ENCODE measurements at regions of chr3 and their contacts with region 1.

Region 1: GRCh38 chr3:52220380-52221026 is 4.9 kb downstream of the TLR9 start:
- DNase-seq: peak; percentile 75 to 90 (median 83)
- ATAC-seq: peak; percentile 88
- H3K4me3 ChIP-seq: peak overlapping the region; percentile 28
- H3K4me3 Mint-ChIP-seq: peak overlapping the region; percentile 39 to 77 (median 64)
- H3K27ac ChIP-seq: no peak overlapping the region
- H3K27ac Mint-ChIP-seq: peak overlapping the region; percentile 65 to 90 (median 77)
- H3K4me1 ChIP-seq: peaks cover 76 to 88% of the 10 kb centered on the region in 2 donors
- H3K4me1 Mint-ChIP-seq: peaks cover 65 to 95% (median 80%) of the 10 kb centered on the region in 7 donors
- H3K27me3 ChIP-seq: no peaks in the 10 kb centered on the region
- H3K27me3 Mint-ChIP-seq: no peaks in the 10 kb centered on the region

Region 2: GRCh38 chr3:52001443-52001974 is 219.0 kb before region 1 on chr3:
- CTCF ChIA-PET with region 1: interaction called, 4 read pairs
- POLR2A ChIA-PET with region 1: no interaction called
- intact Hi-C with region 1: loop called in 1 of 2 experiments (anchors 5 kb)
- DNase-seq: peak; percentile 73 to 86 (median 81)
- ATAC-seq: peak; percentile 98
- H3K4me3 ChIP-seq: no peak overlapping the region
- H3K4me3 Mint-ChIP-seq: peak overlapping the region in 2 of 10 donors; percentile 12 to 16
- H3K27ac ChIP-seq: no peak overlapping the region
- H3K27ac Mint-ChIP-seq: peak overlapping the region in 3 of 9 donors; percentile 8 to 41 (median 11)
- H3K4me1 ChIP-seq: peaks cover 6 to 22% of the 10 kb centered on the region in 2 donors
- H3K4me1 Mint-ChIP-seq: peaks cover 6 to 24% (median 16%) of the 10 kb centered on the region in 7 donors
- H3K27me3 ChIP-seq: no peaks in the 10 kb centered on the region
- H3K27me3 Mint-ChIP-seq: peaks cover 0 to 16% (median 0%) of the 10 kb centered on the region in 5 donors

Region 3: GRCh38 chr3:52197842-52198668 is 22.4 kb before region 1 on chr3 and contains the start of gene ALAS1:
- CTCF ChIA-PET with region 1: interaction called, 5 read pairs
- POLR2A ChIA-PET with region 1: interaction called, 7 read pairs
- intact Hi-C with region 1: loop called (anchors 1 to 2 kb)
- DNase-seq: peak; percentile 86 to 99 (median 94)
- ATAC-seq: peak; percentile 97
- H3K4me3 ChIP-seq: peak within 1 kb of the TSS; percentile 80
- H3K4me3 Mint-ChIP-seq: peak within 1 kb of the TSS; percentile 85 to 98 (median 96)
- H3K27ac ChIP-seq: peak within 1 kb of the TSS; percentile 94
- H3K27ac Mint-ChIP-seq: peak within 1 kb of the TSS; percentile 88 to 98 (median 94)
- H3K4me1 ChIP-seq: peaks cover 25 to 30% of the 10 kb centered on the region in 2 donors
- H3K4me1 Mint-ChIP-seq: peaks cover 33 to 56% (median 49%) of the 10 kb centered on the region in 7 donors
- H3K27me3 ChIP-seq: no peaks in the 10 kb centered on the region
- H3K27me3 Mint-ChIP-seq: no peaks in the 10 kb centered on the region
- total RNA-seq, gene ALAS1: 12.6 to 74.3 (median 27.4) TPM

Region 4: GRCh38 chr3:52238761-52239701 is 18.5 kb after region 1 on chr3 and contains the start of gene TWF2:
- CTCF ChIA-PET with region 1: interaction called, 71 read pairs
- POLR2A ChIA-PET with region 1: interaction called, 54 read pairs
- intact Hi-C with region 1: loop called (anchors 1 to 2 kb)
- DNase-seq: peak; percentile 87 to 96 (median 91)
- ATAC-seq: peak; percentile 91
- H3K4me3 ChIP-seq: peak within 1 kb of the TSS; percentile 92
- H3K4me3 Mint-ChIP-seq: peak within 1 kb of the TSS; percentile 86 to 100 (median 96)
- H3K27ac ChIP-seq: peak within 1 kb of the TSS; percentile 95
- H3K27ac Mint-ChIP-seq: peak within 1 kb of the TSS; percentile 83 to 99 (median 97)
- H3K4me1 ChIP-seq: peaks cover 59 to 62% of the 10 kb centered on the region in 2 donors
- H3K4me1 Mint-ChIP-seq: peaks cover 59 to 88% (median 76%) of the 10 kb centered on the region in 7 donors
- H3K27me3 ChIP-seq: no peaks in the 10 kb centered on the region
- H3K27me3 Mint-ChIP-seq: no peaks in the 10 kb centered on the region
- total RNA-seq, gene TWF2: 38.7 to 110 (median 63.7) TPM

Region 5: GRCh38 chr3:52253314-52254304 is 33.1 kb after region 1 on chr3:
- CTCF ChIA-PET with region 1: interaction called, 7 read pairs
- POLR2A ChIA-PET with region 1: interaction called, 14 read pairs
- intact Hi-C with region 1: no loop called
- DNase-seq: peak in 8 of 9 donors; percentile 81 to 95 (median 94)
- ATAC-seq: peak; percentile 95
- H3K4me3 ChIP-seq: peak overlapping the region; percentile 38
- H3K4me3 Mint-ChIP-seq: peak overlapping the region; percentile 82 to 97 (median 86)
- H3K27ac ChIP-seq: peak overlapping the region; percentile 87
- H3K27ac Mint-ChIP-seq: peak overlapping the region; percentile 92 to 100 (median 98)
- H3K4me1 ChIP-seq: peaks cover 55 to 91% of the 10 kb centered on the region in 2 donors
- H3K4me1 Mint-ChIP-seq: peaks cover 46 to 99% (median 92%) of the 10 kb centered on the region in 7 donors
- H3K27me3 ChIP-seq: no peaks in the 10 kb centered on the region
- H3K27me3 Mint-ChIP-seq: peaks cover 0 to 4% (median 0%) of the 10 kb centered on the region in 5 donors

Region 6: GRCh38 chr3:52291508-52292181 is 71.1 kb after region 1 on chr3:
- CTCF ChIA-PET with region 1: interaction called, 13 read pairs
- POLR2A ChIA-PET with region 1: interaction called, 1,418 read pairs
- intact Hi-C with region 1: no loop called
- DNase-seq: peak in 6 of 9 donors; percentile 42 to 59 (median 49)
- ATAC-seq: peak; percentile 21
- H3K4me3 ChIP-seq: no peak overlapping the region
- H3K4me3 Mint-ChIP-seq: peak overlapping the region in 8 of 10 donors; percentile 1 to 84 (median 30)
- H3K27ac ChIP-seq: no peak overlapping the region
- H3K27ac Mint-ChIP-seq: peak overlapping the region in 4 of 9 donors; percentile 11 to 86 (median 72)
- H3K4me1 ChIP-seq: peaks cover 10 to 22% of the 10 kb centered on the region in 2 donors
- H3K4me1 Mint-ChIP-seq: peaks cover 19 to 36% (median 30%) of the 10 kb centered on the region in 7 donors
- H3K27me3 ChIP-seq: no peaks in the 10 kb centered on the region
- H3K27me3 Mint-ChIP-seq: peaks cover 0 to 3% (median 0%) of the 10 kb centered on the region in 5 donors

Region 7: DNA sequence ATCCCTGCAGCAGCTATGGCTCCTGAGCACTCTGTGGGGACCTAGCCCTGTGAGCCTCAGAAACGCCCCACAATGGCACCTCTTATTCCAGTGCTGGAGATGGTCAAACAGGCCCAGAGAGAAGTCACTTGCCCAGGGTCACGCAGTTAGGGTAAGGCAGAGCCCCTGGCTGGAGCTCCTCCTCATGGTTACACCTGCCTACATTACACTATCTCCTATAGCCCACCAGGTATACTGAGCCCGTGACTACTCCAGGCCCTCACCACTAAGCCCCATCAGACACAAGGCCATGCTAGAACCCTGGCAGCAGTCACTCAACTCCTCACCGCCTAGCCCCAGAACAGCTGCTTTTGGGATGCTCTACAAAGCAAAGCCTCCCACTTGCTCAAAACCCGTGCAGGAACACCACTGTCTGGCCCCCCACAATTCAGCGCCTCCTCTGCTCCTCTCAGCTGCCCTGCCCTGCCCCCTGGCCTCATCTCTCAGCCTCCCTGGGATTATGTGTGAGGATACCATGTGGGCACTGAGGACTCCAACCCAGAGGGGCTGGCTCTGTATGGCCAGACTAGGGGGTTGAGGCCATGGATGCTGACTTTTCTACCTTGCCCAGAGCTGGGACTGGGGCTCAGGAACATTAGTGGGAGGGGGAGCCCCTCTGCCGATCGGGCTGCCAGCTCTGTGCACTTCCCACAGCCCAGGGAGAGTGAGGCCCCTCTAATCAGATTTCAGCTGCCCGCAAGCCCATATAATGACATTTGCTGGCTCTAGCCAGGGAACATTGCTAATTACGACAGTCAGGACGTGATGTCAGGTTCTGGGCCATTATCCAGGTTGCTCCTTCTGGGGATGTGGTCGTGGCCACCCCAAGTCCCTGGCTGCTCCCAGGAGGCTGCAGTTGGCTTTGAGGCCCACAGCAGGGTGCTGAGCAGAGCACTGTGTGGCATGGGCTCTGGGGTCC is 309.2 kb after region 1 on chr3:
- CTCF ChIA-PET with region 1: no interaction called
- POLR2A ChIA-PET with region 1: no interaction called
- intact Hi-C with region 1: no loop called
- DNase-seq: peak in 1 of 9 donors; percentile 4
- ATAC-seq: no peak
- H3K4me3 ChIP-seq: no peak overlapping the region
- H3K4me3 Mint-ChIP-seq: peak overlapping the region in 1 of 10 donors; percentile 29
- H3K27ac ChIP-seq: no peak overlapping the region
- H3K27ac Mint-ChIP-seq: peak overlapping the region in 1 of 9 donors; percentile 65
- H3K4me1 ChIP-seq: peaks cover 0 to 4% of the 10 kb centered on the region in 2 donors
- H3K4me1 Mint-ChIP-seq: peaks cover 0 to 10% (median 3%) of the 10 kb centered on the region in 7 donors
- H3K27me3 ChIP-seq: no peaks in the 10 kb centered on the region
- H3K27me3 Mint-ChIP-seq: no peaks in the 10 kb centered on the region

Measured in naive thymus-derived CD4-positive, alpha-beta T cell (primary cell).